ENCODE measurements at regions of chr10 and their contacts with region 1.

Region 1: DNA sequence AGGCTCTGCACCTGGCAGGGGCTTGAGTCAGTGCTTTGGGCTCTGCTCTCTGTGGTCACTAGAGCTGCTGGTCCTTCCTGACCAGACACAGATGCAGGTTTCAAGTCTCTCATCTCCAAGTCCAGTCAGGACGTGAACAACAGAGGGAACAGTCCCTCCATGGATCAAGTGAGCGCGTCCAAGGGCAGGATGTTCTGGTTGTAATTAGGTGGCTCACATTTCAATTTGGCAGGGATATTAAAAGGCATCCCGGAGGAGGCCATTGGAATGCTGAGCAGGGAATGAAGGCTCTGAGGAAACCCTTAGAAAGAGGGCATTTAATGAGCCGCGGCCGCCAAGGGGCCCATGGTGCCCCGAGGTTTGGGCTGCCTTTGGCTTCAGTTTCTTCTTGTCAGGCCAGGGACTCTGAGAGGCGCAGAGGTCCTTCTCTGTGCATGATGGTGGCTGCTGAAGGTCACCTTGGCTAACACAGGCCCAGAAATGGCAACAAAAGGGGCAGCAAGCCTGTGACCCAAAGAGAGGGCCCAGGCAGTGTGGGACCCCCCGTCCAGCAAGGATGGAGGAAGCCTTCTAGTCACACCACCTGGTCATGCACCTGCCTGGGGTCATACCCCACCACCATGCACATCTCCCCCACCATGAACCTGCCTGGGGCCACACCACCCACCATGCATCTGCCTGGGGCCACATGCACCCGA is 30.7 kb upstream of the INPP5A start:
- DNase-seq: peak; percentile 63 to 71
- H3K4me3 ChIP-seq: no peak overlapping the region
- H3K27ac ChIP-seq: no peak overlapping the region
- H3K4me1 ChIP-seq: peaks cover 0 to 13% (median 6%) of the 10 kb centered on the region in 4 donors
- H3K27me3 ChIP-seq: no peaks in the 10 kb centered on the region
- CTCF ChIP-seq: no peak

Region 2: GRCh38 chr10:132637477-132638129 is 130.7 kb after region 1 on chr10:
- intact Hi-C with region 1: loop called (anchors 5 kb)
- DNase-seq: no peak
- H3K4me3 ChIP-seq: peak overlapping the region; percentile 0 to 1
- H3K27ac ChIP-seq: peak overlapping the region in 1 of 2 donors; percentile 41
- H3K4me1 ChIP-seq: peaks cover 0 to 69% (median 34%) of the 10 kb centered on the region in 4 donors
- H3K27me3 ChIP-seq: no peaks in the 10 kb centered on the region
- CTCF ChIP-seq: peak; percentile 72 to 76

Region 3: GRCh38 chr10:133087679-133088178 is 580.9 kb after region 1 on chr10 and contains the start of gene ADGRA1:
- intact Hi-C with region 1: no loop called
- DNase-seq: no peak
- H3K4me3 ChIP-seq: peak within 1 kb of the TSS in 1 of 2 donors; percentile 8
- H3K27ac ChIP-seq: no peak within 1 kb of the TSS
- H3K4me1 ChIP-seq: peaks cover 0 to 19% (median 11%) of the 10 kb centered on the region in 4 donors
- H3K27me3 ChIP-seq: peaks cover 0 to 89% of the 10 kb centered on the region in 2 donors
- CTCF ChIP-seq: no peak

Measured in tibial artery (tissue), 4 donors.